HCT116 (cell line): ENCODE measurements at regions of chr10 and their contacts with region 1.

Region 1: GRCh38 chr10:51950371-51950995 is 251.1 kb upstream of the CSTF2T start:
- DNase-seq: no peak
- ATAC-seq: no peak
- H3K4me3 ChIP-seq: no peak overlapping the region
- H3K27ac ChIP-seq: no peak overlapping the region
- H3K4me1 ChIP-seq: no peaks in the 10 kb centered on the region
- H3K27me3 ChIP-seq: peaks cover 8% of the 10 kb centered on the region
- CTCF ChIP-seq: no peak
- POLR2A ChIP-seq: no peak
- RAD21 ChIP-seq: no peak

Region 2: DNA sequence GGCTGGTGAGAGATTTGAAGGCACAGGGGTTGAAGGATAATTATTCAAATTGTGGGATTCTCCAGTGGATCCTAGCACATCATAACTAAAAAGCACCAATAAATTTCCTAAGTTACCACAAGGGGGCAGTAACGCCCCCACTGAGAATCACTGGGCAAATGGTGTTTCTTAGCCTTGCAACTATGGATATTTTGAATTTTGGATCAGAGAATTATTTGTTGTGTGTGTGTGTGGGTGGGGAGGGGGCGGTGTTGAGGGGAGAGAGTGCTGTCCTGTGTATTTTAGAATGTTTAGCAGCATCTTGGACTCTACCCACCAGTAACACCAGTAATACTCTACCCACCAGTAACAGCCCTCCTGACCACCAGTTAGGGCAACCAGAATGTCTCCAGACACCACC is 939.5 kb before region 1 on chr10:
- CTCF ChIA-PET with region 1: no interaction called
- POLR2A ChIA-PET with region 1: no interaction called
- RAD21 ChIA-PET with region 1: no interaction called
- intact Hi-C with region 1: loop called (anchors 10 kb)
- DNase-seq: peak; percentile 31
- ATAC-seq: peak; percentile 65
- H3K4me3 ChIP-seq: no peak overlapping the region
- H3K27ac ChIP-seq: no peak overlapping the region
- H3K4me1 ChIP-seq: no peaks in the 10 kb centered on the region
- H3K27me3 ChIP-seq: 0 out of 2 replicates have a peak, but pooled peaks cover 2% of the 10 kb centered on the region
- CTCF ChIP-seq: peak; percentile 26 to 90 (median 74); a peak in 5 of 6 replicates
- POLR2A ChIP-seq: no peak
- RAD21 ChIP-seq: peak; percentile 40; the same call in 1 of the 2 replicates

Region 3: GRCh38 chr10:51867956-51868355 is 82.5 kb before region 1 on chr10:
- CTCF ChIA-PET with region 1: no interaction called
- POLR2A ChIA-PET with region 1: no interaction called
- RAD21 ChIA-PET with region 1: no interaction called
- intact Hi-C with region 1: no loop called
- DNase-seq: no peak
- ATAC-seq: no peak
- H3K4me3 ChIP-seq: no peak overlapping the region
- H3K27ac ChIP-seq: no peak overlapping the region
- H3K4me1 ChIP-seq: no peaks in the 10 kb centered on the region
- H3K27me3 ChIP-seq: 0 out of 2 replicates have a peak, but pooled peaks cover 4% of the 10 kb centered on the region
- CTCF ChIP-seq: no peak
- POLR2A ChIP-seq: no peak
- RAD21 ChIP-seq: no peak